ENCODE measurements at regions of chr15 and their contacts with region 1.

Region 1: DNA sequence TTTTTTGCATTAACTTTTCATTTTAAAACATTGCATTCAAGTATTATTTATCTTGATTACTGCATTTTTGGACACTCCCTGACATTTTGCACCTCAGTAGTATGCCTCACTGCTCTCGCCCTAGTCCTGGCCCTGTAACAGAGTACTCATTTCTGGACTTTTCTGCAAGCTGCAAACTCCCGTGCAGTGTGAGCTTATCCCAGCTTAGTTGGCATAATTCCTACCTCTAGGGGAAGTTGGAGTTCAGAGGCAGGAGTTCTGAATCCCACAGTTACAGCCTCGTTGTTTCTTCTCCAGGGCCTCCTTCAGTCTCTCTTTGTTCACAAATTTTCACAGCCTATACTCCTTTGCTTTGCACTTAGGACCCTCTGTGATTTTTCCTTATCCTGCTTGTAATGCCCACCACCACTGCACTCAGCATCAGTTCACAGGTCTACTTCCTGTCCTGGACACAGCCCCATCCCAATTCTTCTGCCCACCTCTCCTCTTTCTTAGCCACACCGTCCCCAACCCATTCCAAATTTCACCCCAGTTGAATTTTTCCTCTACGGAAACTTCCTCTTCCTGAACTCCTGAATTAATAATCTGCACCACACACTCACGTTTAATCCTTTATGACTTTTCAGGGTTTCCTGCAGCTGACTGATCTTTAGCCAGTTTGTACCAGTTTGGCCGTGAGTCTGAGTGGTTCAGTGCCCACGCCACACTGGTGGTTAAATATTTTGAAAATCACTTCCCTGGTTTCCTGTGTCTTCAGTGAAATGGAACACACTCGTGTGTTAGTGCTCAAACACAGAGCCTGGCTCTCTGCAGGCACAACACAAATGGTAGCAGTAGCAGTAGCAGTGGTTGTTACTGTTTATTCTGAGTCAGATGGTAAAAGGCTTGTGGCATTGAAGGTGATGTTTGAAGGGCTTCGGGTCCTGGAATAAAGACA is 6.3 kb upstream of the CTSH start:
- DNase-seq: peak; percentile 48
- ATAC-seq: peak; percentile 85
- H3K4me3 ChIP-seq: no peak overlapping the region
- H3K27ac ChIP-seq: no peak overlapping the region
- H3K4me1 ChIP-seq: no peaks in the 10 kb centered on the region; the same call in 1 of the 2 replicates
- H3K27me3 ChIP-seq: peaks cover 18% of the 10 kb centered on the region
- CTCF ChIP-seq: peak; percentile 47
- POLR2A ChIP-seq: no peak
- RAD21 ChIP-seq: peak; percentile 23; the same call in 1 of the 2 replicates

Region 2: DNA sequence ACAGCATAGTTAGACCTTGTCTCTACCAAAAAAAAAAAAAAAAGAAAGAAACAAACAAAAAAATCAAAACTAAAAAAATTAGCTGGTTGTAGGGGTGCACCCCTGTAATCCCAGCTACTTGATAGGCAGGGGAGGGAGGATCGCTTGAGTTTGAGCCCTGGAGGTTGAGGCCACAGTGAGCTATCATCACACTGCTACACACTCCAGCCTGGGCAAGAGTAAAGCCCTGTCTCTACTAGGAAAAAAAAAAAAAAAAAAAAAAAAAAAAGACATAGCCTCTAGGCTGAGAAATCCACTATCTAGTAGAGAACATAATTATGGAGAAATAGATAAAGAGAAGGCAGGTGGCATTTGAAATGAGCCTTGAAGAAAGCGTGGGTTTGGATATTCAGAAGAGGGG is 388.1 kb before region 1 on chr15:
- CTCF ChIA-PET with region 1: no interaction called
- POLR2A ChIA-PET with region 1: interaction called, 15 read pairs
- dilution Hi-C with region 1: no loop called
- in situ Hi-C with region 1: no loop called
- intact Hi-C with region 1: no loop called
- DNase-seq: no peak
- ATAC-seq: no peak
- H3K4me3 ChIP-seq: no peak overlapping the region
- H3K27ac ChIP-seq: no peak overlapping the region
- H3K4me1 ChIP-seq: no peaks in the 10 kb centered on the region
- H3K27me3 ChIP-seq: peaks cover 19% of the 10 kb centered on the region
- CTCF ChIP-seq: no peak
- POLR2A ChIP-seq: no peak
- RAD21 ChIP-seq: no peak

Region 3: DNA sequence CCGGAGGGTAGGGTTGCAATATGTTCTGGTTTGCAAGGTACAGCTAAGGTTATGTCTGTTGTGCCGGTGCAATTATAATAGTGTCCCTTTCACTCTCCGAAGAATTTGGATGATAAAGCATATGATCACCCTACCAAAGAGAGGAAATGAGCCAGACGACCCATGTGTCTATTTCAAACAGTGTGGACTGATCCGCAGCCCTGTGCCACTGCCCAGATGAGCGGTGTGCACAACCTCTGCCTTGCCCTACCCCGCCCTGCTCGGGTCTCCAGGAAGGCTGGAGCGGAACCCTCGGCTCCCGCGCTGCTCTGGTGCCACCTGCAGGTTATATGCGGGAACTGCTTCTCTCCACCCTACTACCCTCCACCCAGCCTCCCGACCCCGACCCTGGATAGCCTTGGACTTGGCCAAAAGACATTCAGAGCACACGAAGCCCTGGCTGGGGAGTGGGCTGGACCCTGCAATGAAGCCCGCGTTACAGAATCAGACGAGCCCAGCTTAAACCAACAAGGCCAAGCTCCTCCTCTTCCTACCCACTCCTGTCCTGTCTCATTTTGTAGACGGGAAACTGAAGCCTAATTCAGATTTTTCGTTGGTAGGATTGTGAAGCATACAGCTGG is 241.8 kb before region 1 on chr15:
- CTCF ChIA-PET with region 1: no interaction called
- POLR2A ChIA-PET with region 1: no interaction called
- dilution Hi-C with region 1: no loop called
- in situ Hi-C with region 1: no loop called
- intact Hi-C with region 1: no loop called
- DNase-seq: peak; percentile 7
- ATAC-seq: peak; percentile 100
- H3K4me3 ChIP-seq: no peak overlapping the region
- H3K27ac ChIP-seq: no peak overlapping the region
- H3K4me1 ChIP-seq: no peaks in the 10 kb centered on the region; the same call in 1 of the 2 replicates
- H3K27me3 ChIP-seq: peaks cover 21% of the 10 kb centered on the region
- CTCF ChIP-seq: peak; percentile 77
- POLR2A ChIP-seq: no peak
- RAD21 ChIP-seq: peak; percentile 79

Region 4: DNA sequence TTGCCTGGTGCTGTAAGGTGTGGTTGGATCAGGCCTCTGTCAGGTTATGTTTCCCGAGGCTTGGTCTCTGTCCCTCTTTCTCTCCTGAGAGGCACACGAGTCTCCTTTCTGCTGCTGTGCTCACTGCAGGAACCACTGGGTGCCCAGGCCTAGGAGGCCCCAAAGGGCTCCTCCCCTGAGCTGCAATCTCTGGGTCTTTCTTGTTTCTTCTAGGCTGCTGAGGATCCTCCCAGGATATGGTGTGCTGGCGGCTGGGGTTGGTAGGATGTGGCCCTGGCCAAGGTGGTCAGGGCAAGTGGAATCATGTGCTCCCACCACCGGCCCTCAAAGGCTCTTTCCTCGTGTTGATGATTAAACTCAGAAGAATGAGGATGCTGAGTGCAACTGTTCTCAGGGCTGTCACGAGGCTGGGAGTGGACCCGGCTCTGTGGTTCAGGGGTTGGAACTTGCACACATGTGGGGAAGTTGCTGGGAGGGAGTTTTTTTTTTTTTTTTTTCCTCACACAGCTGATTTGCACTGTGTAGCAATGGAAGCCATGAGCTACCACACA is 37.3 kb after region 1 on chr15:
- CTCF ChIA-PET with region 1: interaction called, 3 read pairs
- POLR2A ChIA-PET with region 1: no interaction called
- dilution Hi-C with region 1: no loop called
- in situ Hi-C with region 1: no loop called
- intact Hi-C with region 1: loop called (anchors 1 kb)
- DNase-seq: peak; percentile 99
- ATAC-seq: peak; percentile 91
- H3K4me3 ChIP-seq: no peak overlapping the region
- H3K27ac ChIP-seq: peak overlapping the region; percentile 77
- H3K4me1 ChIP-seq: peaks cover 26% of the 10 kb centered on the region
- H3K27me3 ChIP-seq: no peaks in the 10 kb centered on the region; the same call in 1 of the 2 replicates
- CTCF ChIP-seq: no peak
- POLR2A ChIP-seq: no peak
- RAD21 ChIP-seq: no peak; the same call in 1 of the 2 replicates

Region 5: DNA sequence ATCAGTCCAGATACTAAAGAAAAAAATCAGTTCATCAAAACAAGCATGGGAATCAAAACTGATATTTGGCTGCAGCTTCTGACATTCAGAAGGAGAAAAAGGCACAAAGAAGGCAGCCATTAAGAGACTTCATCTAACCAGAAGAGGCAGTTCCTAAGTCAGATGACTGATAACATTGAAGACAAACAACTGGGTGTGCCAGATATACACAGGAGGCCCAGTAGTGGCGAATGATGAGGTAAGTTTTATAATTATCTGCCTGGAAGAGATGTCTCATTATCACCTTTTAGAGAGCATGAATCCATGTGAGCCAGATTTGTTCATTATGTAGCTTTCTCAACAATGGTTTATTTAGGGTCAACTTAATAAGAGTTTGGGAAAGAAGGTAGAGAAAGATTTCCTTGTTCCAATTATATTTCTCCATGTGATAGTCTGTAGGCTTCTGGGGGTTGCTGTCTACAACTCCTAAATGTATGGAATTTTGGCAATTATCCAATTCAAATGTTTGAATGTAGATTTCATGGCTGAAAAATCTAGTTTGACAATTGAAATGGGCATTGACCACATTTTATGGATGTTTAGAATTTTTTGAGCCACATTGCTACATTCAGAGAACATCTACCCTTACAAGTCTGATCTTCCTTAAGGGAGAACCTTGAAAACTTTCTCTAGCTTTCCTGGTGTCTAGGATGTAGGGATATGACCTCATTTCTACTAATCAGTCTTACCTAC is 189.8 kb after region 1 on chr15:
- CTCF ChIA-PET with region 1: no interaction called
- POLR2A ChIA-PET with region 1: no interaction called
- dilution Hi-C with region 1: no loop called
- in situ Hi-C with region 1: no loop called
- intact Hi-C with region 1: no loop called
- DNase-seq: no peak
- ATAC-seq: no peak
- H3K4me3 ChIP-seq: no peak overlapping the region
- H3K27ac ChIP-seq: no peak overlapping the region
- H3K4me1 ChIP-seq: no peaks in the 10 kb centered on the region
- H3K27me3 ChIP-seq: no peaks in the 10 kb centered on the region
- CTCF ChIP-seq: no peak
- POLR2A ChIP-seq: no peak
- RAD21 ChIP-seq: no peak

Measured in IMR-90 (cell line).